ENCODE measurements at regions of chr2 and their contacts with region 1.

Region 1: DNA sequence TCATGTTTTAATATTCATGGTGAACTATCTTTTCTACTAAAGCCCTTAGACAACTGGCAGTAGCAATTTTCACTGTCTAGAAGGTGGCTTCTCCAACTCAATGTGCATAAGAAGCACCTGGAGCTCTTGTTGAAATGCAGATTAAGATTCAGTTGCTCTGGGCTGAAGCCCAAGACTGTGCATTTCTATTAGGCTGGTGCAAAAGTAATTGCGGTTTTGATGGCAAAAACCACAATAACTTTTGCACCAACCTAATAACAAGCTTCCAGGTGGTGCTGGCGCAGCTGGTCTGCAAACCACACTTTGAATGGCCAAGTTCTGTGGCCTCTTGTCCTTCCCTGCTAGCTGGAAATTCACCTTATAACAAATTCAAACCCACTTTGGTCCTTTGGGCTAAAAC is 26.7 kb upstream of the VPS54 start:
- DNase-seq: no peak
- H3K4me3 Mint-ChIP-seq: no peak overlapping the region
- H3K27ac Mint-ChIP-seq: no peak overlapping the region
- H3K4me1 Mint-ChIP-seq: peaks cover 8% of the 10 kb centered on the region
- H3K27me3 Mint-ChIP-seq: no peaks in the 10 kb centered on the region
- CTCF ChIP-seq: no peak

Region 2: DNA sequence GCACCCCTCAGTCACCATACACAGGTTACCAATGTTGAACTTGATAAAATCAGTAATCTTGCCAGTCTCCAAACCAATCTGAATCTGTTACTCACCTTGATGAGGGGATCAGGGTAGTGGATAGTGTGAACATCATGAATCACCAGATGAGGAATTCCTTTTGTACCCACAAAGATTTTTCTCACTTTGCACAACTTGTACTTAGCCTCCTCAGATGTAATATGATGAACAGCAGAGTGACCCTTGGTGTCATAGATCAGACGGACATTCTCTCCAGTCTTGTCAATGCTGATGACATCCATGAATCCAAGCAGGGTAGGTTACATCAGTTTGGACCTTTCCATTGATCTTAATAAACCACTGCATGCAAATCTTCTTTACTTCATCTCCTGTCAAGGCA is 402.5 kb before region 1 on chr2:
- CTCF ChIA-PET with region 1: no interaction called
- intact Hi-C with region 1: no loop called
- DNase-seq: no peak
- H3K4me3 Mint-ChIP-seq: no peak overlapping the region
- H3K27ac Mint-ChIP-seq: no peak overlapping the region
- H3K4me1 Mint-ChIP-seq: no peaks in the 10 kb centered on the region
- H3K27me3 Mint-ChIP-seq: peaks cover 33% of the 10 kb centered on the region
- CTCF ChIP-seq: no peak

Region 3: GRCh38 chr2:64086347-64087082 is 40.6 kb after region 1 on chr2:
- CTCF ChIA-PET with region 1: no interaction called
- intact Hi-C with region 1: no loop called
- DNase-seq: no peak
- H3K4me3 Mint-ChIP-seq: no peak overlapping the region
- H3K27ac Mint-ChIP-seq: no peak overlapping the region
- H3K4me1 Mint-ChIP-seq: peaks cover 9% of the 10 kb centered on the region
- H3K27me3 Mint-ChIP-seq: no peaks in the 10 kb centered on the region
- CTCF ChIP-seq: no peak

Region 4: DNA sequence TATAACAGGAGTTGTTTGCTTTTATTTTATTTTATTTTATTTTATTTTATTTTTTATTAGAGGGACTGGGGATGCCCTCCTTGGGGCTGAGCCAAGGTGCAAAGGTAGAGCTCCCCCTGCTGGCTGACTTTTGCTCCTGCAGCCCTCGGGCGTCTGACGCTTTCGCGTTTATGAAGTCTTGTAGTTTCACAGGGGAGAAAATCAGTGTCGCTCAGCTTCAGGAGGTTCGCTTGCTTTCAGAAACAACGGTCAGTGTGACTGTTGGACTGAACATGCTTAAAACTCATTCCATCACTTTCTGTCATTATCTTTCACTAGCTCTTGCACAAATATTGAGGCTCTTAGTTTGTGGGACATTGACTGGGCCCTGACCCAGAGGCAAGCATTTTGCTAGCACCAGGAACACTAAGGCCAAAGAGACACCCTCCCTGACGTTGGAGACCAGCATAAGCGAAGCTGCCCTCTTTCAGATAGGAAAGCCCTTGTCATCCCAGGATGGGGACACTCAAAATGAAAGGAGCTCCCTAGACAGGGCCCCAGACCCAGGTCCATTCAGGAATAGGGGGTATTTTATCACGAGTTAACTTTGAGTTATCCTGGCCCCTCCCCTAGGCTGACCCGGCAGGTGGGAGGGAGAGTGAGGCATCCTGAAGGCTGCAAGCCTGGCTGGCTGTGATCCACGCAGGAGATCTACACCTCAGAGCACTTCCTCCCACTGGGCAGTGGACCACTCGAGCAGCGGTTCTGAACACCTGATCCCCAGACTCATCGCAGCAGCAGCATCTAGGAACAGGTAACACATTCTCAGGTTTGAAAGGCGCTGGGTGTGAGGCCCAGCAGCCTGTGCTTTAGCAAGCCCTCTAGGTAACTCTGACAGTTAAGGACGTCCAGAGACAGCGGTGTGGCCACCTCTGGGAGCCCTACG is 442.4 kb after region 1 on chr2:
- CTCF ChIA-PET with region 1: interaction called, 3 read pairs
- intact Hi-C with region 1: loop called (anchors 5 kb)
- DNase-seq: peak; percentile 83
- H3K4me3 Mint-ChIP-seq: no peak overlapping the region
- H3K27ac Mint-ChIP-seq: no peak overlapping the region
- H3K4me1 Mint-ChIP-seq: no peaks in the 10 kb centered on the region
- H3K27me3 Mint-ChIP-seq: peaks cover 26% of the 10 kb centered on the region
- CTCF ChIP-seq: peak; percentile 95

Measured in Calu3 (cell line).